ENCODE measurements at regions of chr17 and their contacts with region 1.

Region 1: GRCh38 chr17:43673516-43674323 is 12.0 kb upstream of the MEOX1 start:
- DNase-seq: no peak
- H3K4me3 ChIP-seq: no peak overlapping the region
- H3K27me3 ChIP-seq: no peaks in the 10 kb centered on the region
- CTCF ChIP-seq: peak; percentile 96

Region 2: DNA sequence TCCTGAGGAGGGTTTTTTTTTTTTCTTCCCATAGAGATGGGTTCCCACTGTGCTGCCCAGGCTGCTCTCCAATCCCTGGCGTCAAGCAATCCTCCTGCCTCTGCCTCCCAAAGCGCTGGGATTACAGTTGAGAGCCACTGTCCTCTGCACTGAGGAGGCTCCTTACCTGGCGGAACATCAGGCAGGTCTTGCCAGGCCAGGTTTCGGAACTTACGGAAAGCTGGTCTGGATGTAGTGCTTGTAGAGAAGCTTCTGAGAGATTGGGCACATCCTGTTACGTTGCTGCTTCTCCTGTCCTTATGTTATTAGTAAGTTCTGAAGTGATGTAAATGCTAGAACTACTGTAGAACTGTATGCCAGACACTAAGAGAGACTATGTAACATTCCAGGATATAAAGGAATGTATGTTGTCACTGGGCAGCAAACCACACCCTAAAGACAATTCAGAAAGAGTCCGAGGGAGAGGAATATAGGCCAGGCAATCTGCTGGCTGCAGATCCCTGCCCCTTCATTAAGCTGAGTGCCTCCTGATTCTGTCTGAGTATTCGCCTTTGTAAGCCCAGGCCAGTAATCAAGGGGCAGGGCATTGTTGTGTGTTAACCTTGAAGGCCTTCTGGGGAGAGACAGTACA is 148.7 kb before region 1 on chr17:
- CTCF ChIA-PET with region 1: interaction called, 20 read pairs
- POLR2A ChIA-PET with region 1: no interaction called
- DNase-seq: no peak
- H3K4me3 ChIP-seq: no peak overlapping the region
- H3K27me3 ChIP-seq: no peaks in the 10 kb centered on the region
- CTCF ChIP-seq: no peak

Region 3: GRCh38 chr17:43556292-43556691 is 117.4 kb before region 1 on chr17:
- CTCF ChIA-PET with region 1: interaction called, 10 read pairs
- POLR2A ChIA-PET with region 1: no interaction called
- DNase-seq: peak; percentile 83
- H3K4me3 ChIP-seq: no peak overlapping the region
- H3K27me3 ChIP-seq: no peaks in the 10 kb centered on the region
- CTCF ChIP-seq: no peak

Region 4: DNA sequence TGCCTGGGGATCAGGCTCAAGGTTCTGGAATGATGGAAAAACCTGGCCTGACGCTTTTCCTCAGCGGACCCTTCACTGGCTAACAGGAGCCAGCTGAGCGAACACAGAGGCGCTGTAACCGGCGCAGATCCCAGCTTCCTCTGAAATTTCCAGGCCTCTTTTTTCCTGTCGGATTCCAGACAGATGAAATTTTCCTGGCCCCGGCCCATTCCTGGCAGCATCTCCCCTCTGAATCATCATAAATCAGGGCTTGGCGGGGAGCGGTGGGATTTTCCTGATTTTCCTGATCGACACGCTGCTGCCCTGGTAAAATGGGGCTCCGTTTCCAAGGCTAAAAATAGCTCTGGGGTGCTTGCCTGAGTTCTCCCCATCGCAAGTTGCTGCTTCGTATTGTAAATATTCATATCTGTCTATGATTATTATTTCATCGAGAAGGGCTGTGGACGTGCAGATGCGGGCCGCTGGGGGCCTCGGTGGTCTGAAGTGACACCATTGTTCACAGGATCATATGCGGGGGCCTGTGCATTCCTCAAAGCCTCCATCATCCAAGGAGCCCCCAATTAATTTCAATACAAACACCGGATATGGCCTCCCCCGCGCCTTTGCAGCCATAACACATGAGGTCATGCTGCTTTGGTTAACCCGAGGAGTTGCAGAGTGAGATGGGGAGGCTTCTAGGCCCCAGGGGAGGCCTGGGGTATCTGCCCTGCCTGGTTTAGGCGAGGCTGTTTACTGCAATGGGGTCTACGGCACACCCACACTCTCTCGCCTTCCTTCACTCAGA is 81.7 kb before region 1 on chr17:
- CTCF ChIA-PET with region 1: interaction called, 10 read pairs
- POLR2A ChIA-PET with region 1: no interaction called
- DNase-seq: no peak
- H3K4me3 ChIP-seq: no peak overlapping the region
- H3K27me3 ChIP-seq: no peaks in the 10 kb centered on the region
- CTCF ChIP-seq: no peak

Region 5: GRCh38 chr17:43648916-43649315 is 24.8 kb before region 1 on chr17:
- CTCF ChIA-PET with region 1: interaction called, 11 read pairs
- POLR2A ChIA-PET with region 1: no interaction called
- DNase-seq: no peak
- H3K4me3 ChIP-seq: no peak overlapping the region
- H3K27me3 ChIP-seq: no peaks in the 10 kb centered on the region
- CTCF ChIP-seq: no peak

Region 6: DNA sequence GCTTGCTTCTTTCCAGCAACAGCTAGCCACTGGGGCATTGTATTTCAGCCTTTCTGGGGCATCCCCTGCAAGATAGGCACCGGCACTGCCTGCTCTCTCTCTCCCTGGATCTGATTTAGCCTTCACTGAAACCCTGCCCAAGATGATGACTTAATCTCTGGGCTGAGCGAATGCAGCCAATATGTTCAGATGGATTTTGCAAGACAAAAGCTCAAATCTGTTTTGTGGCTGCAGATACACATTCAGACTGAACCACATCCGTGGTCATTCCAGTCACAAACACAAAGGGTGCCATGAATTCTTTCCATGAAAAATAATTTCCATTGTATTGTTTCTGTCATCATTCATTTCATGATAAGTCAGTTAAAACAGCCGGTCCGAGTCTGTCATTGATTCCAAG is 60.7 kb after region 1 on chr17:
- CTCF ChIA-PET with region 1: no interaction called
- POLR2A ChIA-PET with region 1: no interaction called
- DNase-seq: peak; percentile 48
- H3K4me3 ChIP-seq: no peak overlapping the region
- H3K27me3 ChIP-seq: no peaks in the 10 kb centered on the region
- CTCF ChIP-seq: no peak